ENCODE measurements at regions of chr7 and their contacts with region 1.

Region 1: GRCh38 chr7:131164025-131164899 is 163.4 kb upstream of the MKLN1 start:
- DNase-seq: peak; percentile 38 to 97
- H3K4me3 ChIP-seq: peak overlapping the region; percentile 32; the same call in 1 of the 2 replicates
- H3K27ac ChIP-seq: peak overlapping the region; percentile 95
- H3K4me1 ChIP-seq: peaks cover 44% of the 10 kb centered on the region
- H3K27me3 ChIP-seq: no peaks in the 10 kb centered on the region
- CTCF ChIP-seq: 0 out of 2 replicates have a peak, but pooled peaks have one; percentile 14

Region 2: GRCh38 chr7:131027287-131027773 is 136.9 kb before region 1 on chr7:
- CTCF ChIA-PET with region 1: no interaction called
- POLR2A ChIA-PET with region 1: no interaction called
- intact Hi-C with region 1: no loop called
- DNase-seq: peak in 1 of 2 experiments; percentile 43
- H3K4me3 ChIP-seq: no peak overlapping the region
- H3K27ac ChIP-seq: peak overlapping the region; percentile 46
- H3K4me1 ChIP-seq: peaks cover 25% of the 10 kb centered on the region
- H3K27me3 ChIP-seq: no peaks in the 10 kb centered on the region
- CTCF ChIP-seq: no peak

Region 3: DNA sequence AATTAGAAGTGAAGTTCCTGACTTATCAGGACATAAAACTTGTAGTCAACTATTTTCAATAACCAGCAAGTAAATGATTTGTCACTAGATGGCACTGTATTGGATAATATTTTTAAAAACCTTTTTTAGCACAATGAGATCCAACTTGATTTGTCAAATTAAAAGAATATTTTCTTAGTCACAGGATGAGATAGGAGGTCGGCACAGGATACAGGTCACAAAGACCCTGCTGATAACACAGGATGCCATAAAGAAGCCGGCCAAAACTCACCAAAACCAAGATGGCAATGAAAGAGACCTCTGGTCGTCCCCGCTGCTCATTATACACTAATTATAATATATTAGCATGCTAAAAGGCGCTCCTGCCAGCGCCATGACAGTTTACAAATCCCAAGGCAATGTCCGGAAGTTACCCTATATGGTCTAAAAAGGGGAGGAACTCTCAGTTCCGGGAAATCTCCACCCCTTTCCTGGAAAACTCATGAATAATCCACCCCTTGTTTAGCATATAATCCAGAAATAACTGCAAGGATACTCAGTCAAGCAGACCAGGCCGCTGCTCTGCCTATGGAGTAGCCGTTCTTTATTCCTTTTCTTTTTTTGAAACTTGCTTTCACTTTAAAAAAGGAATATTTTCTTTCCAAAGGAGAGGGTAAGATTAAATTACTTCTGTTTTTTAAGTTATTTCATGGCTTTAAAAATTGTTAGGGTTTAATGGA is 92.3 kb before region 1 on chr7:
- CTCF ChIA-PET with region 1: no interaction called
- POLR2A ChIA-PET with region 1: no interaction called
- intact Hi-C with region 1: no loop called
- DNase-seq: no peak
- H3K4me3 ChIP-seq: no peak overlapping the region
- H3K27ac ChIP-seq: no peak overlapping the region
- H3K4me1 ChIP-seq: peaks cover 3% of the 10 kb centered on the region
- H3K27me3 ChIP-seq: no peaks in the 10 kb centered on the region
- CTCF ChIP-seq: peak; percentile 60; the same call in 1 of the 2 replicates

Region 4: DNA sequence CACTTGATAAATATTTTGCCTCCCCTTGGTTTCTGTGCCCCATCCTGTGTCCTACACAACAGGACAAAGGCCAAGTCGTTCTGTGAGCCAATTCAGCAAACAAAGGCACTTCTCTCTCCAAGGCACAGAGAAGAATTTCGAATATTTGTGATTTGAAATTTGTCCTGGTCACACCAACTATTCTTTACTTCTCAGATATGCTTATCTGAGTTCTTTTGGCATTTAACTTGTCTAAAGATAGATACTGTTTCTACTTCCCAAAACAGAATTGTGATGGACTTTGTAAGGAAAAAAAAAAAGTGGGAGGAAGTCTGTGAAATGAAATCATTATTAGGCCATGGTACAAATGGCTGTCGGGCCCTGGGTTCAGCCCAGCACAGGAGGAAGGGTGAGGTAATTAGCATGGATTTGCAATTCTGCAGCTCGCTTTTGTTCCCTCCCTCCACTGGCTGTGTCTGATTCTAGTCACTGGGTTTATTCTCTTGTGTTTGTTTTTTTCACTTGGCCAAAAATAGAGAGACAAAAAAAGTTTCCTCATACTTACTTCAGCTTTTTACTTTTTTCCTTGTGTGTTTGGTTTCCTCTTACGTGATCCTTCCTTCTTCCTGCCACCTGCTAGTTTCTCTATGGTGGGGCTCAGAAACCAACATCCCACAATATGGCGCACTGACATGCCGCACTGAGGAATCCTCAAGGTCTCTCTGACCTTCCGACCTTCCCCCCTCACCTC is 55.2 kb after region 1 on chr7:
- CTCF ChIA-PET with region 1: no interaction called
- POLR2A ChIA-PET with region 1: interaction called, 13 read pairs
- intact Hi-C with region 1: no loop called
- DNase-seq: no peak
- H3K4me3 ChIP-seq: no peak overlapping the region
- H3K27ac ChIP-seq: no peak overlapping the region
- H3K4me1 ChIP-seq: no peaks in the 10 kb centered on the region
- H3K27me3 ChIP-seq: no peaks in the 10 kb centered on the region
- CTCF ChIP-seq: no peak

Measured in PC-9 (cell line).